HepG2 (cell line): ENCODE measurements at regions of chr10 and their contacts with region 1.

Region 1: DNA sequence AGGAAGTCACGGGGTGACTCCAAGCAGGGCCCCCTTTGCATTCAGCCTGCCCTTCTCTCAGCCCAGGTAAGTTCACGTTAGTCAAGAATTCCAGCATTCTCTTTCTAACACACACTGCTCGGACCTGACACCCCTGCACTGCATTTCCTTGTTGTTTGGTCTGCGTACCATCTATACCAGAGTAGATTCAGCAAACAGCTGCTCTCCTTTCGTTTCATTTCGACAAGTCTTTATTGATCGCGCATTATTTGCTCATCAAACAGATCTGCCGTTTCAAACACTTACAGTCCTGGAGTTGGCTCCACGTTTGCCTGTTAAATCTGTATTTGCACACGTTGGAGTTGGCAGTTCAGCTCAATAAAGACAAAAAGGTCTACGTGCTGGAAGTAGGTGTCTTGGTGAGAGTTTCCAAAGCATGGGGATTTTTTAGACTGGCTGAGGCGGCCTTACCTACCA is 495.1 kb downstream of the RPS24 start:
- DNase-seq: peak; percentile 95
- ATAC-seq: peak; percentile 97
- H3K4me3 ChIP-seq: peak overlapping the region; percentile 1 to 42 (median 31); a peak in 5 of 6 replicates
- H3K27ac ChIP-seq: peak overlapping the region; percentile 64
- H3K4me1 ChIP-seq: peaks cover 71% of the 10 kb centered on the region
- H3K27me3 ChIP-seq: no peaks in the 10 kb centered on the region
- CTCF ChIP-seq: peak; percentile 19; the same call in 1 of the 2 replicates
- EP300 ChIP-seq: peak in 1 of 2 experiments; percentile 90; a peak in 2 of 4 replicates
- POLR2A ChIP-seq: no peak
- RAD21 ChIP-seq: no peak; the same call in 1 of the 2 replicates

Region 2: GRCh38 chr10:78335691-78336401 is 192.9 kb before region 1 on chr10:
- CTCF ChIA-PET with region 1: no interaction called
- POLR2A ChIA-PET with region 1: no interaction called
- in situ Hi-C with region 1: no loop called
- intact Hi-C with region 1: no loop called
- DNase-seq: no peak
- ATAC-seq: no peak; the same call in 2 of the 3 replicates
- H3K4me3 ChIP-seq: no peak overlapping the region
- H3K27ac ChIP-seq: no peak overlapping the region
- H3K4me1 ChIP-seq: no peaks in the 10 kb centered on the region
- H3K27me3 ChIP-seq: peaks cover 1 to 5% of the 10 kb centered on the region in 2 experiments; a peak in 2 of 5 replicates
- CTCF ChIP-seq: no peak
- EP300 ChIP-seq: no peak
- POLR2A ChIP-seq: no peak
- RAD21 ChIP-seq: no peak

Region 3: DNA sequence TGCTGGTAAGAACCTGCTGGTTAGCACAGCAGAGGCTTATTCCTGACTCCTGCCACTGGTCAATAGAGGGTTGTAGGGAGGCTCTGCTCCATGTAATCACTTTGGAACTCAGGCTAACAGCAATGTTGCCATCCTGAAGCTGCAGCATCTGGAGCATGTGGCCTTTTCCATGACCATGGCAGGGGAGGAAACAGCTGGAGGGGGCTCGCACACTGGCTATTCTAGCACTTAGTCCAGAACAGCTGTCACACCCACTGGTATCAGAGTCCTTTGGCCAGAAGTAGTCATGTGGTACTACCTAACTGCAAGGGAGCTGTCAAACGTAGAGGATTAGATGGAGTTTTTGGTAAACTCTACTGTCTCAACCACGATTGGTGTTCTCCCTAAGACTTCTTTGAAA is 45.1 kb before region 1 on chr10:
- CTCF ChIA-PET with region 1: no interaction called
- POLR2A ChIA-PET with region 1: no interaction called
- in situ Hi-C with region 1: no loop called
- intact Hi-C with region 1: no loop called
- DNase-seq: no peak
- ATAC-seq: no peak
- H3K4me3 ChIP-seq: no peak overlapping the region
- H3K27ac ChIP-seq: no peak overlapping the region
- H3K4me1 ChIP-seq: peaks cover 7% of the 10 kb centered on the region; the same call in 1 of the 2 replicates
- H3K27me3 ChIP-seq: no peaks in the 10 kb centered on the region
- CTCF ChIP-seq: no peak
- EP300 ChIP-seq: no peak
- POLR2A ChIP-seq: no peak
- RAD21 ChIP-seq: no peak

Region 4: DNA sequence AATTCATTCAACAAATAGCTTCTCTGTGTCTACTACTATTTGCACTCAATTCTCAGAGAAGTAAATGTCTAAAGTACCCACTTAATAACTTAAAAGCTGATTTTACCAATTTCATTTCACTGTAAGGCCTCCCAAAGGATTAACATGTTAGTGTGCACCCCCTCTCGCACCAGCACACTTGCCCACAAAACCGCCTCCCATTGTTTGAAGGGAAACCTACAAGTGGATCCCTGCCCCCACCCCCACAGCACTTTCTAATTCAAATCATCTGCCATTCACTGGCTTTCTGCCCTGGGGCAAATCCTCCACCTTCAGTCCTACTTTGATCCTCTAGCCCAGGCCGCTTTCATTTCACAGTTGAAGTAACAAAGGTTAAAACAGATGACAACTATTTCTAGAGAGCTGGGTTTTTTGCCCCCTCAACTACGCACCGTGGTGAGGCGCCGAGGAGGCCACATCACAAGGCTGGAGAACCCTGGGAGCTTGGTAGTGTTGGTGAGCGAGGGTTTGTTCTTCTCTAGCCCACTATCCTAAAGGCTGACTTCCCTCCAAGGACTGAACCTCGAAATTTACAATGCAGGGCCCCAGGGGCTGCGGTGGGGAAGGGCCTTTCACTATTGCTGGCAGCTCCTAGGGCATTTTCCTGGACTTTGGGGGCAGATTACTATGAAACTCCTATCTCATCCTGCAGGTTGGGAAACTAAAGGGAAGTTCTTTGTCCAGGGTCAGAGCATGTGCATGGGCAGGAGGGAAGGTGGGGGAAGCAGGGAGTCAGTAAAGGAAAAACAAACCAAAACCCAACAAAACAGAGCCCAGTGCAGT is 22.6 kb after region 1 on chr10:
- CTCF ChIA-PET with region 1: no interaction called
- POLR2A ChIA-PET with region 1: interaction called, 12 read pairs
- in situ Hi-C with region 1: no loop called
- intact Hi-C with region 1: no loop called
- DNase-seq: peak; percentile 81
- ATAC-seq: peak; percentile 81
- H3K4me3 ChIP-seq: peak overlapping the region; percentile 3 to 50 (median 4); a peak in 5 of 6 replicates
- H3K27ac ChIP-seq: peak overlapping the region; percentile 97
- H3K4me1 ChIP-seq: peaks cover 81% of the 10 kb centered on the region
- H3K27me3 ChIP-seq: no peaks in the 10 kb centered on the region
- CTCF ChIP-seq: no peak
- EP300 ChIP-seq: no peak
- POLR2A ChIP-seq: 0 out of 4 replicates have a peak, but pooled peaks have one; percentile 15 to 31
- RAD21 ChIP-seq: no peak